Body of pancreas (tissue), 4 donors: ENCODE measurements at regions of chr1 and their contacts with region 1.

Region 1: GRCh38 chr1:64231153-64231552 is 27.7 kb downstream of the UBE2U start:
- DNase-seq: no peak
- ATAC-seq: no peak
- H3K4me3 ChIP-seq: no peak overlapping the region
- H3K27ac ChIP-seq: no peak overlapping the region
- H3K4me1 ChIP-seq: no peaks in the 10 kb centered on the region
- H3K27me3 ChIP-seq: no peaks in the 10 kb centered on the region
- CTCF ChIP-seq: no peak
- POLR2A ChIP-seq: no peak

Region 2: DNA sequence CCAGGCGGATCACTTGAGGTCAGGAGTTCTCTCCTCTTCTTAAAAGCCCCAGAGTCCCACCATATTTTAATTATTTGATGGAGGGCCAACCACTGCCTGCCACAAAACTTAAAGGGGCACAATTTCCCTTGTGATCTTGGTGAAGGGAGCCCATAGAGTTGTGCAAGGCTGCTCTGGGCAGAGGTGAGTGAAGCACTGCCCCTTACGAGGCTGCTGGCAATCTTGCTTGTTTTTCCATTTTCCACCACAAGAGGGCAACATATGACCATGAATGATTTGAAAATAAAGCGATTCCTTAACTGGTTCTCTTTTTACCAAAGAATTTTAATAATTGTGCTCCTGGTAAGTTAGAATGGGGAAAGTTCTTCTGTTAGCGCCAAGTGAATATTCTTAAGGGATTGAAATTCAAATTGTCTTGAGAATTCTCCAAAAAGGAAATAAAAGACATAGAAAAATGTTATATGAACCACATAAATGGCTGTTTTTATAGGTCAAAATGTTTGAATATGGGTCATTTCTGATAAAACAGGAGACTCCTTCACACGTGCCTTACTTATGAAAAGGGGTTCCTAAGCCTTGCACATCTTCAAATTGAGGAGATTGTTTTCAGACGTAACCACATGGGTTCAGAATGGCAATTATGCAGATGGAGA is 615.3 kb before region 1 on chr1:
- intact Hi-C with region 1: loop called (anchors 5 kb)
- DNase-seq: peak; percentile 74 to 79 (median 76)
- ATAC-seq: peak; percentile 82
- H3K4me3 ChIP-seq: no peak overlapping the region
- H3K27ac ChIP-seq: no peak overlapping the region
- H3K4me1 ChIP-seq: peaks cover 29% of the 10 kb centered on the region
- H3K27me3 ChIP-seq: no peaks in the 10 kb centered on the region
- CTCF ChIP-seq: peak; percentile 49 to 86 (median 81)
- POLR2A ChIP-seq: no peak

Region 3: GRCh38 chr1:63688302-63688890 is 542.8 kb before region 1 on chr1:
- intact Hi-C with region 1: loop called (anchors 10 kb)
- DNase-seq: no peak
- ATAC-seq: no peak
- H3K4me3 ChIP-seq: no peak overlapping the region
- H3K27ac ChIP-seq: no peak overlapping the region
- H3K4me1 ChIP-seq: peaks cover 15% of the 10 kb centered on the region
- H3K27me3 ChIP-seq: no peaks in the 10 kb centered on the region
- CTCF ChIP-seq: no peak
- POLR2A ChIP-seq: no peak